Activated CD4-positive, alpha-beta memory T cell treated with anti-CD3 and anti-CD28 coated beads for 36 hours (primary cell): ENCODE measurements at regions of chr11 and their contacts with region 1.

Region 1: GRCh38 chr11:117621226-117621625 is 175.8 kb downstream of the DSCAML1 start:
- DNase-seq: peak; percentile 41
- H3K4me3 Mint-ChIP-seq: no peak overlapping the region
- H3K27ac Mint-ChIP-seq: no peak overlapping the region
- H3K4me1 Mint-ChIP-seq: no peaks in the 10 kb centered on the region
- H3K27me3 Mint-ChIP-seq: peaks cover 5% of the 10 kb centered on the region

Region 2: DNA sequence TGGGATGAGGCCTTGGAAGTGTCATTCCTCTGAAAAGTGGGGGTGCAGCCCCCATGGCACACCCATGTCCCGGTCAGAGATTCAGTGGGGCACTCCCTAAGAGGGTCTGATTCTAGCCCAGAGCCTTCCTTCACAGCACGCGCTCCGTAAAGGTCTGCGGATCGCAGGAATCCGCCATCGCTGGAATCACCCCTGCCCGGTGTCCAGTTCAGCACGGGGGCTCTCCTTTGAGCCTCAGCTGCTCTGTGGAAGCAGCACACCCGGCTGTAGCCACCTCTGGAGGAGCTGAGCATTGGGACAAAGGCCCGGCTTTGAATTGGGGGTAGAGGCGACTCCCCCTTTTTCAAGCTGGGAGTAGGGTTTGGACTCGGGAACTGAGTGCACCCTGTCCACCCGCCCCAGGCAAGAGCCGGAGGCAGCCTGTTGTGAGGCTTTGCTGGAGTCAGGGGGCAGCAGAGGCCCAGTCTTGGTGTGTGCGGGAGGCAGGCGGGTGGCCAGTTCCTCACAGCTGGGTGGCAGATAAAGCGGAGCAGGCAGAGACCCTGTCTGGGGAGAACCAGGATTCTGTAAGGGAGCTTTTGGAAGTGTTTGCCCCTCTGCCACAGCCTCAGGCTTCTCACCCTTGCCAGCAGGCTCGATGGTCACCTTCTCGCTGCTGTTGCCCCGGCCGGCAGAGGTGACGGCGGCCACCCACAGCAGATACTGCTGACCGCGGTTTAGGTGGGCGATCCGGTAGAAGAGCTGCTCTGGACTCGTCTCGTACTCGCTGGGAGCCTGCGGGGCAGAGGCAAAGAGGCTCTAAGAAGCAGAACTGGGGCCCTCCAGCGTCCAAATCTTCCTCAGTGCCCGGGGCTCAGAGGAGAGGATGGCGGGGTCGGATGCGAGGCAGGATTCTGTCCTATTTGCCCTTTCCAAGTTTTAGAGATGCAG is 177.7 kb before region 1 on chr11:
- CTCF ChIA-PET with region 1: interaction called, 26 read pairs
- POLR2A ChIA-PET with region 1: no interaction called
- intact Hi-C with region 1: no loop called
- DNase-seq: peak; percentile 66
- H3K4me3 Mint-ChIP-seq: no peak overlapping the region
- H3K27ac Mint-ChIP-seq: no peak overlapping the region
- H3K4me1 Mint-ChIP-seq: no peaks in the 10 kb centered on the region
- H3K27me3 Mint-ChIP-seq: peaks cover 32% of the 10 kb centered on the region

Region 3: DNA sequence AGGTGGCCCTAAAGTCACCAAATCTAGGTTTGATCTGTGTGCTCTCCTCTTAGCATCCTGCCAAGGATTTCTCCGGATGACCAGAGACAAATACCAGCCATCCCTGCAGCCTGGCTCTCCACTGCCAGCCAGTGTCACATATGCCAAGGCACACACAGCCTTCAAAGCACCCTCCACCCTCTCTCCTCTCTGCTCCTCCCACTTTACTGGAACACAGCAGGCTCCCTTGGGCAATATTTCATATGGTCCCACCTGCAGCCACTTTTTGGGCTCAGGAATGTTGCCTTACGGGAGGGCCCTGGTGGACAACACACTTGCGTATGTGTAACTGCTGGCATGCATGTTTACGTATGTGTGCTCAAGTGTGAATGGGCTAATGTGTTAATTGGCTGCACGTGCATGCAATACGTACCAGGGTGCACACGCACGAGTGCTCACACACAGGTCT is 109.7 kb before region 1 on chr11:
- CTCF ChIA-PET with region 1: no interaction called
- POLR2A ChIA-PET with region 1: no interaction called
- intact Hi-C with region 1: no loop called
- DNase-seq: no peak
- H3K4me3 Mint-ChIP-seq: no peak overlapping the region
- H3K27ac Mint-ChIP-seq: no peak overlapping the region
- H3K4me1 Mint-ChIP-seq: no peaks in the 10 kb centered on the region
- H3K27me3 Mint-ChIP-seq: peaks cover 10% of the 10 kb centered on the region

Region 4: DNA sequence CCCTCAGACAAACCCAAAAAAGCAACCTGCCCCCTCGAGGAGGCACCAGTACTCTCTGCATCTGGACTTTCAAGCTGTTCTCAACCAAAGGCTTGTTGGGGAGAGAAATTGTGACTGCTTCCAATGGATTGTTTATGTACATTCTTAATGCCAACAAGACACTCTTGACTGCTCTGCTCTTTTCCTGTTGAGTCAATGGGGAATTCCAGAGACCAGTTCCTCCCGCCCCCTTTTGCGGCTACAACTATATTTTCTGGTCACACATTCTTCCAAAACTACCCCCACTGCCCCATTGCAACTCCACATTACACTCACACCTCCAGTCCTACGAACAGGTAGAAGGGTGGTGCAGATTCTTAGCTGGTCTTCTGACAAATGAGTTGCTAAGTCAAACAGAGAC is 11.2 kb before region 1 on chr11:
- CTCF ChIA-PET with region 1: interaction called, 20 read pairs
- POLR2A ChIA-PET with region 1: no interaction called
- intact Hi-C with region 1: no loop called
- DNase-seq: peak; percentile 75
- H3K4me3 Mint-ChIP-seq: no peak overlapping the region
- H3K27ac Mint-ChIP-seq: no peak overlapping the region
- H3K4me1 Mint-ChIP-seq: peaks cover 28% of the 10 kb centered on the region
- H3K27me3 Mint-ChIP-seq: peaks cover 6% of the 10 kb centered on the region

Region 5: DNA sequence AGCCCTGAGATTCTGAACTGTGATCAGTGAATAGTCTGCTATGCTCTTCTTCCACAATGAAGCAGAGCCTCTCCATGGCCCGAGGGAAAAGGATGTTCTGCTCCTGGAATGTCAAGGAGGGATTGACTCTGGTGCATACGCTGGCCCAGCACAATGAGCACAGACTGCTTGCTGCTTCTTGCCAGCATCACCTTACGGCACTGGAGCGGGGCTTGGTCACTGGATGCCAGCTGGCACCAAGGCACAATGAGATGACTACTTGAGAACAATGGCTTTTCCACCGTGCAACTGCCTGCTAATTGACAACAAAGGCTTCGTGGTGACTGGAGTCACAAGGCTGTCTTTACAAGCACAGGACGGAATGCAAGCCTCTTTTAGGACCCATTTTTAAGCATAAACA is 36.6 kb after region 1 on chr11:
- CTCF ChIA-PET with region 1: no interaction called
- POLR2A ChIA-PET with region 1: no interaction called
- intact Hi-C with region 1: no loop called
- DNase-seq: no peak
- H3K4me3 Mint-ChIP-seq: no peak overlapping the region
- H3K27ac Mint-ChIP-seq: no peak overlapping the region
- H3K4me1 Mint-ChIP-seq: no peaks in the 10 kb centered on the region
- H3K27me3 Mint-ChIP-seq: no peaks in the 10 kb centered on the region